Ovary (tissue), 10 donors: ENCODE measurements at regions of chr19 and their contacts with region 1.

Region 1: DNA sequence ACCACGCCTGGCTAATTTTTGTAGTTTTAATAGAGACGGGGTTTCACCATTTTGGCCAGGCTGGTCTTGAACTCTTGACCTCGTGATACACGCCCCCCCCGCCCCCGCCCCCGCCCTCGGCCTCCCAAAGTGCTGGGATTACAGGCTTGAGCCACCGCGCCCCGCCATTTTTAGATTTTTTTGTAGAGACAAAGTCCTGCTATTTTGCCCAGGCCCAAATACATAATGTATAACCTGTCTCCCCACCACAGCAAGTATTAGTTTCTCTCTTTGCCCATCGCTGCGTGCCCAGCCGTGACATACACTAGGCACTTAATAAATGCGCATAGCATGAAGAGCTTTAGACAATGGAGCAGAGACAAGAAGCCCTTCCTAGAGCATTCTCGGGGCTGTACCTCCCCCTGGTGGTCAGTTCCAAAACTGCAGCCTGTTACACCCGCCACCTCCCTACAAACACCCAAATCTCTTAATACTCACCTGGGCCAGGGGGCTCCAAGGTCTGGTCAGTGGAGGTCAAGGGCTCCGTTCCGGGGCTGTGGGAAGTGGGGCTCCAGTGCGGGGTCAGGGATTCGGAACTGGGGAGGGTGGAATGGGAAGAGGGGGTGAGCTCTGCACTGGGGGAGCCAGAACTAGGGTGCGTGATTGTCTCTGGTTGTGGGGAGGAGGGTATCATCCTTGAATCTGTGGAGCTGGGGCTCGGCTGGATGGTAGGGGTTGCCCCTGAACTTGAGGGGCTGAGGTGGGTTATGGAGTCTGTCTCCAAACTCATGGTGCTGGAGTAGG is 22.5 kb downstream of the IQCN start:
- DNase-seq: peak; percentile 59 to 84 (median 83)
- H3K4me3 ChIP-seq: no peak overlapping the region
- H3K27ac ChIP-seq: no peak overlapping the region
- H3K4me1 ChIP-seq: no peaks in the 10 kb centered on the region
- H3K27me3 ChIP-seq: no peaks in the 10 kb centered on the region
- CTCF ChIP-seq: peak; percentile 92 to 97 (median 95)
- EP300 ChIP-seq: no peak
- POLR2A ChIP-seq: peak; percentile 24

Region 2: GRCh38 chr19:18007044-18007916 is 244.5 kb before region 1 on chr19:
- intact Hi-C with region 1: loop called in 2 of 4 experiments (anchors 5 to 10 kb)
- DNase-seq: peak; percentile 73 to 90 (median 79)
- H3K4me3 ChIP-seq: peak overlapping the region; percentile 43
- H3K27ac ChIP-seq: peak overlapping the region; percentile 17 to 60
- H3K4me1 ChIP-seq: peaks cover 5% of the 10 kb centered on the region
- H3K27me3 ChIP-seq: no peaks in the 10 kb centered on the region
- CTCF ChIP-seq: peak; percentile 91 to 94 (median 93)
- EP300 ChIP-seq: no peak
- POLR2A ChIP-seq: no peak

Region 3: GRCh38 chr19:18117692-18118378 is 133.9 kb before region 1 on chr19:
- intact Hi-C with region 1: loop called in 3 of 4 experiments (anchors 5 to 10 kb)
- DNase-seq: peak; percentile 87 to 96 (median 93)
- H3K4me3 ChIP-seq: peak overlapping the region; percentile 66
- H3K27ac ChIP-seq: peak overlapping the region; percentile 20 to 35
- H3K4me1 ChIP-seq: peaks cover 13% of the 10 kb centered on the region
- H3K27me3 ChIP-seq: no peaks in the 10 kb centered on the region
- CTCF ChIP-seq: no peak
- EP300 ChIP-seq: no peak
- POLR2A ChIP-seq: no peak

Region 4: GRCh38 chr19:18192673-18193387 is 58.9 kb before region 1 on chr19 and contains the start of gene MPV17L2:
- intact Hi-C with region 1: loop called in 2 of 4 experiments (anchors 2 to 10 kb)
- DNase-seq: peak; percentile 98 to 100 (median 99)
- H3K4me3 ChIP-seq: peak within 1 kb of the TSS; percentile 62
- H3K27ac ChIP-seq: peak within 1 kb of the TSS; percentile 81 to 95
- H3K4me1 ChIP-seq: peaks cover 6% of the 10 kb centered on the region
- H3K27me3 ChIP-seq: no peaks in the 10 kb centered on the region
- CTCF ChIP-seq: peak in 2 of 3 donors; percentile 2 to 23
- EP300 ChIP-seq: peak; percentile 37
- POLR2A ChIP-seq: peak; percentile 93
- total RNA-seq, gene MPV17L2: 6.9 to 15.2 (median 8.6) TPM

Region 5: DNA sequence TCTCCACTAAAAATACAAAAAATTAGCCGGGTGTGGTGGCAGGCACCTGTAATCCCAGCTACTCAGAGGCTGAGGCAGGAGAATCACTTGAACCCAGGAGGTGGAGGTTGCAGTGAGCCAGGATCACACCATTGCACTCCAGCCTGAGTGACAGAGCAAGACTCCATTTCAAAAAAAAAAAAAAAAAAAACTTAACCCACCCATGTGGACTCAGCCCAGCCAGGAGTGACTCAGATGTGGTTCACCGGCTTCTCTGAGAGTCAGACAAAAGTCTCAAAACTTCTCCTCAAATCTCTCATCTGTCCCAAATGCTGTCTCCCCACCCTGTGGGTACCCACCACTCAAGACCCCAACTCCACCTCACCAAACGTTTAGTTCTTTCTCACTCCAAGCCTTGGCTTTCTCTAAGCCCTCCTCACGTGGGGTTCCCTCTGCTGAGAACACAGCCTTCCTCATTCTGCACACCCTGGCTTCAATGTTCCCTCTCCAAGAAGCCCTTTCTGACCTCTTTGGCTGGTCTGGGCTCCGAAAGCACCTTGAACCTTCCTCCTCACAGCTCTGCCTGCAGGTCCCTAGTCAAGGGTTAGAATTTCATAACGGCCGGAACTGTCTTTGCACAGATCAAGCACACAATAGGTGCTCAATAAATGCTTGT is 36.9 kb before region 1 on chr19:
- intact Hi-C with region 1: loop called in 1 of 4 experiments (anchors 5 kb)
- DNase-seq: no peak
- H3K4me3 ChIP-seq: no peak overlapping the region
- H3K27ac ChIP-seq: no peak overlapping the region
- H3K4me1 ChIP-seq: no peaks in the 10 kb centered on the region
- H3K27me3 ChIP-seq: no peaks in the 10 kb centered on the region
- CTCF ChIP-seq: no peak
- EP300 ChIP-seq: no peak
- POLR2A ChIP-seq: no peak